Posterior cingulate gyrus (tissue), 11 donors: ENCODE measurements at regions of chr22 and their contacts with region 1.

Region 1: GRCh38 chr22:23178512-23179254 is 1.6 kb upstream of the BCR start:
- DNase-seq: peak; percentile 54 to 97 (median 80)

Region 2: GRCh38 chr22:23205339-23206049 is 26.8 kb after region 1 on chr22:
- intact Hi-C with region 1: no loop called
- DNase-seq: peak in 1 of 10 donors; percentile 68

Region 3: DNA sequence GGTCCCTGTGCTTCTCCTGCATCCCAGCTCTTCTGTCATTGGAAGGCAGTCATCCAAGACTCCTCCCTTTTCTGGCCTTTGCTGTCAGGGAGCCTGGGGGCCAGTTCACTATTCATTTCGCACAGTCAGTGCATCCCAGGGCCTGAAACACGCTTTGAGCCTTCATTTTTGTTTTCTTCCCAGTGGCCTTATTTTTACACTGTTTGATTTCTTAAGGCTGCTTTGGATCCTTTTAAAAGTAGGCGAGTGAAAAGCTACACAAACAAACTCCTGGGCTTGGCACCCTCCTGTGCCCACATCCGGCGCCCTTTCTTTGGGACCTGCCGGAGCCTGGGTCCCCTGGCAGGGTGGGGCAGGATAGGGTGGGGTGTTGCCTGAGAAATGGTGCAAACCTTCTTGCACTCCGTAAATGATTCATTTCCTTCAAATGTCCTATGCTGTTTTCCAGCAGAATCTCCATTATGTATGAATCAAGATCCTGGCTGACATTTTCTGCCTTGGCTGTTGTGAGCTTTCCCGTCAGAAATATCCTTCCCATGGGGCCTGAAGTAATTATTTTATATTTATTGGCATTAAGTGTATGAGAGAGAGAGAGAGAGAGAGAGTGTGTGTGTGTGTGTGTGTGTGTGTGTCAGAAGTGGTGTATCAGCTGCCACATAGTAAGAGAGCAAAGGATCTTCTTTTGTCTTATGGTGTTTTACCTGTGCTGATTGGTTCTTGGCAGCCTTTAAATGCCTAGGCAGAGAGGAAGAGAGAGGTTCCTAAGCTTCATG is 47.2 kb after region 1 on chr22:
- intact Hi-C with region 1: loop called (anchors 5 kb)
- DNase-seq: peak in 1 of 10 donors; percentile 69

Region 4: DNA sequence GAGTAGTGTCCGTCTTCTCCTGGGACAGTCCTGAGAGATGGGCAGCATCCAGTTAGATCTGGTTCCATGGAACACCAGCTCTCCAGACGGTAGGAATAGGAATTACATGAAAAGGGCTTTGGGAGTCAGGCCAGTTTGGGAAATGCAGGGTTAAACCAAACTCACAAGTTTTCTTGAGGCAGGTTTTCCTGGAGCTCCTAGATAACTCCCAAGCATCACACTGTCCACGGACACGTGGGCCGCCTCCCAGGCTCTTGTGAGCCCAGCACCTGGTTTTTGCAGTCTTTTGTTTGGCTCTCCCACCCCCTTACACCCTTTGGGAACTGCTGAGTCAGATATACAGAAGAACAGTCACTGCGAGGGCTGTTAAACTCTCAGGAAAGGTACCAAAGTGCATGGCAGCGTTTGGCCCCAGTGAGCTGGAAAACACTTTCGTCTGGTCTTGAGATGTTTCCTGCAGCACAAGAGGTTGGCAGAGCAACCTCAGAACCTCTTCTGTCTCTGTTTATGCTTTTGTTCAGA is 91.6 kb after region 1 on chr22:
- intact Hi-C with region 1: no loop called
- DNase-seq: no peak

Region 5: DNA sequence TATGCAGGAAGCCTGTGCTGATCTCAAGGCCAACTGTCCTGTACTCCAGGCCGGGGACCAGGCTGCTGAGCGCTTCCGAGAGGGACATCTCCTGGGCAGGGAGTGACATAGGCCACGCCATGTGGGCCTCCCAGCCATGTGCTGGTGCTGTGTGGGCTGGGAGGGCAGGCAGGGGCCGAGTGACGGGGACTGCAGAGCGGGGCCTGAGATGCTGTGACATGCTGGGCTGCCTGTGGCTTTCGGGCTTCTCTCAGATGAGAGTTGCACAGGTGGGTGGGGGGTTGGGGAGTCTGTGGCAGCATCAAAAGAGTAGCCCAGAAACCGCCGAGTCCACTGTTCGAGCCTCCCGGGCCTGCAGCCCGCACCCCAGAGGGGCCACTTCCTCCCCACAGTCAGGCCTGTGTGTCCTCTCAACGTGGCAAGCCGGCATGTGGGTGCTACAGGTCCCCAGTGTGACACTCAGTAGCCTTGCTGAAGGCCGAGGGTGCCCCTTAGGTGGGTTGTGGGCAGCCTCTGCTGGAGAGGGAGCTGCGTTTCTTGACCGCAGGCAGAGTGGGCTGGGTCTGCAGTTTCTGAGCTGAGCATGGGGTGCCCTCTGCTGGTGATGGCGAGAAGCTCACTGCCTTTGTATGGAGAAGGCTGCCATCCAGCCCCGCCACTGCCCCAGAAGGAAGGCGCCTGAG is 102.9 kb after region 1 on chr22:
- intact Hi-C with region 1: loop called (anchors 1 kb)
- DNase-seq: peak; percentile 77 to 98 (median 90)

Region 6: DNA sequence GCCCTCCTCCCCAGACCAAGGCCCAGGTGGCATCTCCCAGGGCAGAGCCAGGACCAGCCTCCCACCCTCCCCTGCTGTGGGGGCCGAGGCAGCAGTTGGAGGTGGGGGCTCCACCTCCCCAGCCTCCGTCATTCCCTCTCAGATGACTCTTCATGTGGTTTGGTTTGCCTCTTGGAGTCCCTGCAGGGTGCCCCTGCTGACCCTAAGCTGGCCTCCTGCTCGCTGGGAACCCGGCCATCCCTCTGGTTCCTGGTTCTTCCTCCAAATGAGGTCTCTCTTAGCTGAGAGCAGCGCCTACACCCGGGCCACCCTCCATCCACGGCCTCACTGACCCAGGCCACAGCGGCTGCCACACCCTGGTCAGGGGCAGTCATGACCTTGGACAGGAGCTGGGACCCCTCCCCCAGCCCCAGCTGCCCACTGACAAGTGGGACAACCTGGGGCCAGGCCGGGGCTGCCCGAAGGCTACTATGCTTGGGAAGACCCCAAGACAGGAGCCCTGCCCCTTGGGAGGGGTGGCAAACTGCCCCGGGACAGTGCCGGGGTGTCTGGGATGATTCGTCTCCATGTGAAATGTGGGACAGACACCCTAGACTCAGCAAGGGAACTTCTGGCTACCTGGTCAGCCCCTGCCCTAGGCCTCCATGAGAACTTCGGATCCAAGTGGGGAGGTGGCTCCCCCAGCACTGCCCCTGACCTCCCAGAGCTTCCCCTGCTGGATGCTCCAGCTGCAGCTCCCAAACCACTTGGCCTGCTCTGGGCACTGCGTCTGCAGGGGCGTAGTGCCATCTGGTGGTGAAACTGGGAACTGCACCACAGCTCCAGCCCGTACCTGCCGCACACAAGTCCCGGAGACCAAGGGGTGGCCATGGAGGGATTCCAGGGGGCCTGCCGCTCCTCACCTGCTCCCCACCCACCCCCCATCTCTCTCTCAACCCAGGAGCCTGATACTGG is 206.9 kb after region 1 on chr22:
- intact Hi-C with region 1: loop called (anchors 5 kb)
- DNase-seq: peak; percentile 75 to 98 (median 91)